AG04450 (cell line): ENCODE measurements at regions of chr10 and their contacts with region 1.

Region 1: GRCh38 chr10:94423627-94424026 is 21.3 kb downstream of the TBC1D12 start:
- DNase-seq: peak; percentile 38
- H3K4me3 ChIP-seq: no peak overlapping the region
- H3K27ac ChIP-seq: no peak overlapping the region
- H3K27me3 ChIP-seq: no peaks in the 10 kb centered on the region
- CTCF ChIP-seq: no peak

Region 2: GRCh38 chr10:94376865-94377264 is 46.8 kb before region 1 on chr10:
- CTCF ChIA-PET with region 1: no interaction called
- POLR2A ChIA-PET with region 1: no interaction called
- DNase-seq: no peak
- H3K4me3 ChIP-seq: no peak overlapping the region
- H3K27ac ChIP-seq: no peak overlapping the region
- H3K27me3 ChIP-seq: no peaks in the 10 kb centered on the region
- CTCF ChIP-seq: no peak

Region 3: GRCh38 chr10:94412449-94412848 is 11.2 kb before region 1 on chr10:
- CTCF ChIA-PET with region 1: interaction called, 3 read pairs
- POLR2A ChIA-PET with region 1: interaction called, 11 read pairs
- DNase-seq: peak; percentile 42
- H3K4me3 ChIP-seq: no peak overlapping the region
- H3K27ac ChIP-seq: no peak overlapping the region
- H3K27me3 ChIP-seq: no peaks in the 10 kb centered on the region
- CTCF ChIP-seq: no peak

Region 4: DNA sequence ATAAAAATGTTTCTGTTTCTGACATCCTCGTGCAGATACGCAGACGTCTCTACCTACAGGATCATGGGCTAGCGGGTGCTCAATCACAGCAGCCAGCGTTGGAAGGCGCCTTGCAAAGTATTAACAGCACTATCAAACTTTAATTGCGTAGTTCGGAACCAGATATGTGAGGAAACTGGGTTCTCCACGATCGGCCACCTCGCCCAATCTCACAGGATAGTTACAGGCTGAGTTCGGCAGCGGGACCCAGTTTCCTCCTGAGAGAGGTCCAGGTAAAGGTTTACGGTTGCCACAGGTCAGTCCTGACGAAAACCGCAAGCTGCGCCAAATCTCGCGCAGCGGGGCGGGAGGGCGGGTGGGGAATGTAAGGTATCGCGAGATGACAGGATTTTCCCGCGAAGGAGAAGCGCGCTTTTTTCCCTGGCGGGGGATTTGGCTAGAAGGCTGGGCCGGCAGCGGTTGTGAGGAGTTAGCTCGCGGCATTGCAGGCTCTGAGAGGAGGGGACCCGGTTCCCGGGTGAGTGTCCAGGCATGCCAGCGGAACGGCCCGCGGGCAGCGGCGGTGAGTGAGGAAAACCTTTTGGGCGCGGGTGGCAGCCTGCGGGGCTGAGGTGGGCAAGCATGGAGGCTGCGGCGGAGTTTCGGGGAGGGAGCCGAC is 121.9 kb after region 1 on chr10 and contains the start of gene HELLS:
- CTCF ChIA-PET with region 1: no interaction called
- POLR2A ChIA-PET with region 1: interaction called, 12 read pairs
- DNase-seq: peak; percentile 70
- H3K4me3 ChIP-seq: peak within 1 kb of the TSS; percentile 95
- H3K27ac ChIP-seq: peak within 1 kb of the TSS; percentile 73
- H3K27me3 ChIP-seq: no peaks in the 10 kb centered on the region
- CTCF ChIP-seq: no peak
- polyA plus RNA-seq, gene HELLS: 6.7 and 10.0 TPM in 2 replicates